ENCODE measurements at regions of chr11 and their contacts with region 1.

Region 1: GRCh38 chr11:2208691-2209369 is 37.2 kb upstream of the TH start:
- ATAC-seq: peak in 3 of 8 experiments; percentile 52 to 69 (median 56)
- H3K4me3 ChIP-seq: no peak overlapping the region
- H3K27ac ChIP-seq: no peak overlapping the region
- H3K4me1 ChIP-seq: peaks cover 17 to 31% of the 10 kb centered on the region in 2 donors

Region 2: DNA sequence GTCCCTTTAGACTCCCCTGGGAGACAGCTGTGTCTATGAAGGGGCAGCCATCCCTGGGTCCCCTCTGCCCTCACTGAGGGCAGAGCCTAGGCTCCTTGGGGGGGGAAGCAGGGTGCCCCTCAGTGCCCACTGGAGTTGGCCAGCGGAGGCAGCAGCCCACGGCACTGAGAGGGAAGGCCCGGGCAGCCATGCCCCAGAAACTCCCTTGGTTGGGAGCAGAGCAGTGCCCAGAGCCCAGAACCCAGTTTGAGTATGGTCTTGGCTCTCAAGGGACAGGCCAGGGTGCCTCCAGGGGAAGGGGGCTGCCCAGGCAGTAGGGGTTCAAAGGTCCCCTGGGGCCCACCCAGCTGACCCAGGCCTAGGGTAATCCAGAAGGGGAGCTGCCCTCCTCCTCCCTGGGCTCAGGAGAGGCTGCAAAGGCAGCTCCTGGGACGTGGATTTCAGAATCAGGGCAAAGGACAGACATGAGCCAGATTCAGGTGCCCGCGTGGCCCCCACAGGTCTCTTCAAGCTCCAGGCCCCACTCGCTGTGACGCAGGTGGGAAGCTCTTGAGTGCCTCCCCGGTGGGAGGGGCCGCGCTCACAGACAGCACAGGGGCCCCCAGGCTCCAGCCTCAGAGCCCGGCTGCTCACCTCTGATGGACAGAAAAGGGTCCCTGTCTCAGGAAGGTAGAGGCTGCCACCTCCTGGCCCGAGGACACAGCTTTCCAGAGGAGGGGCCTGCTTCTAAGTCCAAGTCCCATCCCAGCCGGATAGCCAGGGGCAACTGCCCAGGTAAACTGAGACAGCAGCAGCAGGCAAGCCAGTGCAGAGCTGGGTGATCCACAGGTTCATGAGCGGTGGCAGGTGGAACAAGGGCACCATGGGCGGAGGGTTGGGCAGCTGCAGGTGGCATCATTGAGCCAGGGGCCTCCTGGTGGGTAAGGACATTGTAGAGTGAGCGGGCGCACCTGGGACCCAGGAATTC is 90.2 kb after region 1 on chr11:
- in situ Hi-C with region 1: loop called in 1 of 9 experiments (anchors 10 kb)
- ATAC-seq: peak; percentile 26 to 81 (median 46)
- H3K4me3 ChIP-seq: no peak overlapping the region
- H3K27ac ChIP-seq: no peak overlapping the region
- H3K4me1 ChIP-seq: peaks cover 0 to 16% of the 10 kb centered on the region in 2 donors

Region 3: DNA sequence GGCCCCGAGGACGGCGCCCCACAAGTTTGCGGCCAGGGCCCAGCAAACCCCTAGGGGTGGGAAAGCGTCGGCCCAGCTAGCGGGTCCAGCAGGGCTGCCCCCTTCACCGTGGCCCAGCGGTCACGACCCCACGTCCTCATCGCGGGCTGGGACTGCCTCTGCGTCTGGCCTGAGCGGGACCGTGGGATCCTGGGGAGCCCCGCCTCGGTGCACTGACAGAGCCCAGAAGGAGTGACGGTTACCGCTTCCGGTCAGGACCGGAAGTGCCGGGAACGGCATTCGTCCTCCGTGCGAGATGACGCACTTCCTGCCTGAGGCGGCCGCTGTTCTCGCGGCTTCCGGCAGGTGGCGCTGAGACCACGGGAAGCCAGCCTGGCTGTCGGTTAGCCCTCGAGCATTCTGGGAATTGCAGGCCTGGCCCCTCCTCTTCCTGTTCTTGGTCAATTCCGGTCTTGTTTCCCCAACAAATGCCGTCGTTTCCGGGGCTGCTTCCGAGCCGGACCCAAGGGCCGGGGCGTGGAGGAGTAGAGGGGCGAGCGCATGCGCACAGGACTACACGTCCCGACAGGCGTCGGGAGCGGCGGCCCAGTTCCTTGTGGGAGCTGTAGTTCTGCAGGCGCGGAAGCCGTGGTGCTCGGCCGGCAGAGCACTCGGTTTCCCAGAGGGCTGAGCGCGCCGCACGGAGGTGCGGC is 191.4 kb after region 1 on chr11 and contains the start of gene TSSC4:
- in situ Hi-C with region 1: loop called in 1 of 9 experiments (anchors 25 kb)
- ATAC-seq: peak; percentile 83 to 90 (median 88)
- H3K4me3 ChIP-seq: peak within 1 kb of the TSS; percentile 74 to 98 (median 76)
- H3K27ac ChIP-seq: peak within 1 kb of the TSS; percentile 94 to 98
- H3K4me1 ChIP-seq: peaks cover 15 to 16% of the 10 kb centered on the region in 2 donors
- total RNA-seq, gene TSSC4: 34.1 to 51.2 (median 42.6) TPM

Region 4: GRCh38 chr11:2511421-2512369 is 302.9 kb after region 1 on chr11:
- in situ Hi-C with region 1: loop called in 1 of 9 experiments (anchors 25 kb)
- ATAC-seq: peak in 1 of 8 experiments; percentile 23
- H3K4me3 ChIP-seq: no peak overlapping the region
- H3K27ac ChIP-seq: no peak overlapping the region
- H3K4me1 ChIP-seq: no peaks in the 10 kb centered on the region

Measured in motor neuron (in vitro differentiated cells).